CD8-positive, alpha-beta T cell (primary cell): ENCODE measurements at regions of chr16 and their contacts with region 1.

Region 1: DNA sequence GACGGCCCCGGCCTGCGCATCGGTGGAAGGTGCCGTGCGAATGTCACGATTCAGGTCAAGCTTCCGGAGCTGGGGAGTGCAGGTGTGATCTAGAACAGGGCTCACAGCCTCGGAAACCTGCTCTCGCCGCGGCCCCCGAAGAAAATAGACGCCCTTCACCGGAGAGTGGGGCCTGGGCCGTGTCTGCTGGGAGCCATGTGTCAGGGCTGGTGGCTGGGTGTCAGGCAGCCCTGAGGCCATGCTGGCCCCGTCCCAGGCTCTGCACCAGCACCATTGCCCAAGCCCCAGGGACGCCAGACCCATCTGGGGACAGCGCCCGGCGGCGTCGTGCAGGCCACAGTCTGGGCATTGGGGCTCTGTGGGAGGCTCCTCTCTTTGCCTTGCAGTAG is 5.4 kb upstream of the NUDT16L1 start:
- DNase-seq: no peak
- ATAC-seq: no peak
- H3K4me3 ChIP-seq: no peak overlapping the region
- H3K4me3 Mint-ChIP-seq: no peak overlapping the region
- H3K27ac ChIP-seq: no peak overlapping the region
- H3K27ac Mint-ChIP-seq: peak overlapping the region; percentile 37
- H3K4me1 ChIP-seq: peaks cover 14% of the 10 kb centered on the region
- H3K4me1 Mint-ChIP-seq: peaks cover 6% of the 10 kb centered on the region
- H3K27me3 ChIP-seq: no peaks in the 10 kb centered on the region
- H3K27me3 Mint-ChIP-seq: no peaks in the 10 kb centered on the region
- CTCF ChIP-seq: no peak

Region 2: DNA sequence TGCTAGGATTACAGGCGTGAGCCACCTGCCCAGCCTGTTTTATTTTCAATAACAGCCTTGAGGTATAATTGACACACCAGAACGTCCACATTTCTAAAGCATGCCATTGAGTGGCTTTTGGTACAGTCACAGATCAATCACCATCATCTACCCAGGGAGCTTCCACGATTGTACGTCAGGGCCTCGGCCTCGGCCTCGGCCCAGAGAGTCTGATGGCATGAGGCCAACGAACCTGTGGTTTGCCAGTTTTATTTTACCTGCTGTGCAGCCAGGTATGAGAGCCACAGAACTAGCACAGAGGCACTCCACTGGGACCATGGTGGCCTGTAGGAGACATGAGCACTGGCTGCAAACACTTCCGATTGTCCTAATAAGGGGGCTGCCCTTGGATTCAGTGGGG is 81.6 kb before region 1 on chr16:
- CTCF ChIA-PET with region 1: no interaction called
- POLR2A ChIA-PET with region 1: no interaction called
- intact Hi-C with region 1: no loop called
- DNase-seq: no peak
- ATAC-seq: no peak
- H3K4me3 ChIP-seq: no peak overlapping the region
- H3K4me3 Mint-ChIP-seq: no peak overlapping the region
- H3K27ac ChIP-seq: no peak overlapping the region
- H3K27ac Mint-ChIP-seq: no peak overlapping the region
- H3K4me1 ChIP-seq: no peaks in the 10 kb centered on the region
- H3K4me1 Mint-ChIP-seq: no peaks in the 10 kb centered on the region
- H3K27me3 ChIP-seq: no peaks in the 10 kb centered on the region
- H3K27me3 Mint-ChIP-seq: peaks cover 2% of the 10 kb centered on the region
- CTCF ChIP-seq: no peak

Region 3: GRCh38 chr16:4718466-4718865 is 30.5 kb after region 1 on chr16:
- CTCF ChIA-PET with region 1: no interaction called
- POLR2A ChIA-PET with region 1: no interaction called
- intact Hi-C with region 1: loop called in 1 of 2 experiments (anchors 1 kb)
- DNase-seq: no peak
- ATAC-seq: no peak
- H3K4me3 ChIP-seq: no peak overlapping the region
- H3K4me3 Mint-ChIP-seq: no peak overlapping the region
- H3K27ac ChIP-seq: no peak overlapping the region
- H3K27ac Mint-ChIP-seq: no peak overlapping the region
- H3K4me1 ChIP-seq: no peaks in the 10 kb centered on the region
- H3K4me1 Mint-ChIP-seq: no peaks in the 10 kb centered on the region
- H3K27me3 ChIP-seq: no peaks in the 10 kb centered on the region
- H3K27me3 Mint-ChIP-seq: no peaks in the 10 kb centered on the region
- CTCF ChIP-seq: no peak